CD8-positive, alpha-beta T cell (primary cell): ENCODE measurements at regions of chr1 and their contacts with region 1.

Region 1: GRCh38 chr1:69967245-69967766 is 238.1 kb downstream of the LRRC40 start:
- DNase-seq: no peak
- ATAC-seq: no peak
- H3K4me3 ChIP-seq: no peak overlapping the region
- H3K4me3 Mint-ChIP-seq: no peak overlapping the region
- H3K27ac ChIP-seq: no peak overlapping the region
- H3K27ac Mint-ChIP-seq: no peak overlapping the region
- H3K4me1 ChIP-seq: no peaks in the 10 kb centered on the region
- H3K4me1 Mint-ChIP-seq: no peaks in the 10 kb centered on the region
- H3K27me3 ChIP-seq: no peaks in the 10 kb centered on the region
- H3K27me3 Mint-ChIP-seq: no peaks in the 10 kb centered on the region
- CTCF ChIP-seq: no peak

Region 2: DNA sequence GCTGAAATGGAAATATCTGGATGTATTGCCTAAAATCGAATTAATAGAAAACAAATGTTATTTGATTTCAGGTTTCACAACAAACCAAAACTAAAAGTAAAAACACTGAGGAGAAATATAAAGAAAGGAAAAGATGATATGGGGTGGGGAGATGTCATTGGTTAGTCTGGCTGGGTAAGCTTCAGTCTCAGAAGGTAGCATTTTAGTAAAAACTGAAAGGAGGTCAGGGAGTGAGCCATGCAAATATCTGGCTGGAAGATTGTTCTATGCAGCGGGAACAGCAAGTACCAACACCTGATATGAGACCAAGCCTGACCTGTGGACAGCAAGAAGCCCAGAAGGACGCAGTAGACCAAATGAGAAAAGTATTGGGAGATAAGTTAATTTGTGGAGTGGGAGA is 26.5 kb before region 1 on chr1:
- CTCF ChIA-PET with region 1: no interaction called
- POLR2A ChIA-PET with region 1: no interaction called
- intact Hi-C with region 1: loop called in 1 of 2 experiments (anchors 1 kb)
- DNase-seq: no peak
- ATAC-seq: no peak
- H3K4me3 ChIP-seq: no peak overlapping the region
- H3K4me3 Mint-ChIP-seq: no peak overlapping the region
- H3K27ac ChIP-seq: no peak overlapping the region
- H3K27ac Mint-ChIP-seq: no peak overlapping the region
- H3K4me1 ChIP-seq: no peaks in the 10 kb centered on the region
- H3K4me1 Mint-ChIP-seq: no peaks in the 10 kb centered on the region
- H3K27me3 ChIP-seq: no peaks in the 10 kb centered on the region
- H3K27me3 Mint-ChIP-seq: no peaks in the 10 kb centered on the region
- CTCF ChIP-seq: no peak

Region 3: DNA sequence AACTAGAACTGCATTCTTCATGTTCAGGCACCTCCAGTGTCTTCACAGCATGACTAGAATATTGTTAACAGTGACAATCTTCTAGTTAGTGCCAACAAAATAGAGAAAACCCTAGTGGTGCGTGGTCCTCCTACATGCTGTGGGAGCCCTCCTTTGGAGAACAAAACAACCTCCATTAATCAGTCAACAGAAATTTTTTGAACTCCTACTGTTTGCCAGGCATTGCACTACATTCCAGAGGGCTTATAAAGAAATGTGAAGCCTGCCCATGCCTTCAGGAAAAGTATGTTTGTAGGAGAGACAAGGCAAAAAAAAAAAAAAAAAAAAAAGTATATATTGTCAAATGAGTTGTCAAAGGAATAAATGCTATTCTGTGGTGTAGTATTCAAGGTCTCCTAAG is 14.6 kb before region 1 on chr1:
- CTCF ChIA-PET with region 1: no interaction called
- POLR2A ChIA-PET with region 1: no interaction called
- intact Hi-C with region 1: no loop called
- DNase-seq: no peak
- ATAC-seq: no peak
- H3K4me3 ChIP-seq: no peak overlapping the region
- H3K4me3 Mint-ChIP-seq: no peak overlapping the region
- H3K27ac ChIP-seq: no peak overlapping the region
- H3K27ac Mint-ChIP-seq: no peak overlapping the region
- H3K4me1 ChIP-seq: no peaks in the 10 kb centered on the region
- H3K4me1 Mint-ChIP-seq: no peaks in the 10 kb centered on the region
- H3K27me3 ChIP-seq: no peaks in the 10 kb centered on the region
- H3K27me3 Mint-ChIP-seq: no peaks in the 10 kb centered on the region
- CTCF ChIP-seq: no peak

Region 4: DNA sequence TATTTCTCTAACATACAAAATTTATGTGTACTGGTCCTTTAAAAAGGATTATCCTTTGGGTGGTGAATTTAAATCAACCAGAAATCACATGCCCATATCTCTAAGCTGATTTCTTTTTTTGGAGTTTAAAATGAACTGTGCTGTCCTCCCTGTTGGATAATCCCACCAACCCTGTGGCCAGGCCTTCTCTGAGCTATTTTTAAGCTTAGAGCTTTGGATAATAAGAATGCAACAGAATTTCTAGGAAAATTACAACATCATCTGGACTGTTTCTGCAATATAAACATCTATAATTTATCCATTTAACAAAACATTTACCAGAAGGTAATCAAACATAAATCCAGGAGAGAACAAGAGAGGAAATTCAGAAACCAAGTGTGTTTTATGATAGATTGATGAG is 149.7 kb after region 1 on chr1:
- CTCF ChIA-PET with region 1: no interaction called
- POLR2A ChIA-PET with region 1: no interaction called
- intact Hi-C with region 1: no loop called
- DNase-seq: no peak
- ATAC-seq: no peak
- H3K4me3 ChIP-seq: no peak overlapping the region
- H3K4me3 Mint-ChIP-seq: no peak overlapping the region
- H3K27ac ChIP-seq: no peak overlapping the region
- H3K27ac Mint-ChIP-seq: no peak overlapping the region
- H3K4me1 ChIP-seq: no peaks in the 10 kb centered on the region
- H3K4me1 Mint-ChIP-seq: no peaks in the 10 kb centered on the region
- H3K27me3 ChIP-seq: no peaks in the 10 kb centered on the region
- H3K27me3 Mint-ChIP-seq: peaks cover 21% of the 10 kb centered on the region
- CTCF ChIP-seq: no peak

Region 5: DNA sequence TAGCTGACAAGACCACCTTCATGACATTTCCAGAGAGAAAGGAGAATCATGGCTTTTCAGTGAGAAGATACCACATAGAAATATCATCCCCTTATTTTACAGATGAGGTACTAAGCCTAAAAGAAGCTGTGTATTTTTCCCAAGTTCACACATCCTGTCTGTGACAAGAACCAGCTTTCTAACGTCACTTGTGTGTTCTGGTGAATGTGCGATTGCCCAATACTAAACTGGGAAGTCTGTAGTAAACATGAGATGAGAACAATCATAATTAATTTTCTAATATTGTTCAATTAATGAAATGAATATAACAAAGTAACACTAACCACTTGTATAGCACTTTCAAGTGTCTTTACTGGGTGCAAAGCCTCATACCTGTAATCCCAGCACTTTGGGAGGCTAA is 1034.3 kb after region 1 on chr1:
- CTCF ChIA-PET with region 1: no interaction called
- POLR2A ChIA-PET with region 1: no interaction called
- intact Hi-C with region 1: no loop called
- DNase-seq: no peak
- ATAC-seq: no peak
- H3K4me3 ChIP-seq: no peak overlapping the region
- H3K4me3 Mint-ChIP-seq: no peak overlapping the region
- H3K27ac ChIP-seq: no peak overlapping the region
- H3K27ac Mint-ChIP-seq: no peak overlapping the region
- H3K4me1 ChIP-seq: no peaks in the 10 kb centered on the region
- H3K4me1 Mint-ChIP-seq: no peaks in the 10 kb centered on the region
- H3K27me3 ChIP-seq: no peaks in the 10 kb centered on the region
- H3K27me3 Mint-ChIP-seq: peaks cover 5% of the 10 kb centered on the region
- CTCF ChIP-seq: no peak